ENCODE measurements at regions of chr15 and their contacts with region 1.

Region 1: GRCh38 chr15:33700695-33701304 is 267.5 kb upstream of the CHRM5 start:
- DNase-seq: peak; percentile 87
- ATAC-seq: peak; percentile 90
- H3K4me3 Mint-ChIP-seq: no peak overlapping the region
- H3K27ac Mint-ChIP-seq: no peak overlapping the region
- H3K4me1 Mint-ChIP-seq: peaks cover 23% of the 10 kb centered on the region
- H3K27me3 Mint-ChIP-seq: no peaks in the 10 kb centered on the region
- CTCF ChIP-seq: peak; percentile 89

Region 2: GRCh38 chr15:33234014-33234461 is 466.8 kb before region 1 on chr15:
- CTCF ChIA-PET with region 1: interaction called, 15 read pairs
- POLR2A ChIA-PET with region 1: no interaction called
- DNase-seq: no peak
- ATAC-seq: peak; percentile 55
- H3K4me3 Mint-ChIP-seq: no peak overlapping the region
- H3K27ac Mint-ChIP-seq: no peak overlapping the region
- H3K4me1 Mint-ChIP-seq: peaks cover 12% of the 10 kb centered on the region
- H3K27me3 Mint-ChIP-seq: no peaks in the 10 kb centered on the region
- CTCF ChIP-seq: peak; percentile 39; the same call in 1 of the 2 replicates

Region 3: DNA sequence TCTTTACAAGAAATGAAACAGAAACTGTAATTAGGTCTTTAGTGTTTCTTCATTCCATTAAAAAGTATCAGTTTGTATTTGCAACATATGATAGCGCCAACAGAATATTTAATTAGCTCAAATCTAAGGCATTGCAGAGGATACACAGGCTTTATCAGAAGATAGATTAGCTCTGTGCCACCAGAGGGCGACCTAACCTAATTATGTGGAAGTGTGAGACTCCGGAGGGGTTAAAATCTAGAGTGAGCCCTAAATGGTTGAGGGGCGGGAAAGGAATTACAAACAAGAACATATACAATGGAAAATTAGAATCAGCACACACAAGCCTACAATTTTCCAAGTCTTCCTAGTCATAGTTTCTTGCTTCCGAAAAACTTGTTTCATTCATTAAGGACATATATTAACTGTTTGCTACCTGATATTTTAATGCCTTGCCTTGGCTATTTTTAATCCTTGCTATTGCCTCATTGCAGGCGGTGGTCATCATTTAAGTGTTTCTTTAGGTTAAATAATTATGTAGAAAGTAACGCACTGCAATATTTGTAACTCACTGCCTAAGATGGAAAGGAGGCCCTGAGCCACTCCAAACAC is 408.0 kb before region 1 on chr15:
- CTCF ChIA-PET with region 1: interaction called, 131 read pairs
- POLR2A ChIA-PET with region 1: no interaction called
- DNase-seq: peak; percentile 74
- ATAC-seq: peak; percentile 88
- H3K4me3 Mint-ChIP-seq: no peak overlapping the region
- H3K27ac Mint-ChIP-seq: no peak overlapping the region
- H3K4me1 Mint-ChIP-seq: 0 out of 2 replicates have a peak, but pooled peaks cover 4% of the 10 kb centered on the region
- H3K27me3 Mint-ChIP-seq: no peaks in the 10 kb centered on the region
- CTCF ChIP-seq: peak; percentile 46; the same call in 1 of the 2 replicates

Region 4: GRCh38 chr15:33398555-33398954 is 302.2 kb before region 1 on chr15:
- CTCF ChIA-PET with region 1: interaction called, 20 read pairs
- POLR2A ChIA-PET with region 1: no interaction called
- DNase-seq: no peak
- ATAC-seq: no peak; the same call in 1 of the 2 replicates
- H3K4me3 Mint-ChIP-seq: no peak overlapping the region
- H3K27ac Mint-ChIP-seq: no peak overlapping the region
- H3K4me1 Mint-ChIP-seq: peaks cover 34% of the 10 kb centered on the region
- H3K27me3 Mint-ChIP-seq: no peaks in the 10 kb centered on the region
- CTCF ChIP-seq: no peak

Region 5: DNA sequence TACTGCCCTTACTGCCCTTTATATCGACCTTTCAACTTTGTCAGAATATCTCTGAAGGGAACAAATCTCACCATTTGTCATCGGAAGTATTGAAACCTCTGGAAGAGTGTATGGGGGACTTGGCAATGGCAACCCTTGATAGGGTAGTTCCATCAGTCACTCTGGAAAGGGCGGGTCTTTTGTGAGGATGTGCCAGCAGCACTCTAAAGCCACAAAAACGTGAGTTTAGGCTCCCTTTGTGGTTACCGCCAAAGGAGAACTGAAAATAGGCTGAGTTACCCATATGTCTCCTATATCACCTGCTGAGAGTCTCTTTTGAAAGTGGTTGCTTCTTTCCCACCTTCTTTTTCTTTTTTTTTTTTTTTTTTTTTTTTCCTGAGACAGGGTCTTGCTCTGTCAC is 29.3 kb before region 1 on chr15:
- CTCF ChIA-PET with region 1: interaction called, 12 read pairs
- POLR2A ChIA-PET with region 1: no interaction called
- DNase-seq: no peak
- ATAC-seq: no peak
- H3K4me3 Mint-ChIP-seq: no peak overlapping the region
- H3K27ac Mint-ChIP-seq: no peak overlapping the region
- H3K4me1 Mint-ChIP-seq: peaks cover 20% of the 10 kb centered on the region
- H3K27me3 Mint-ChIP-seq: no peaks in the 10 kb centered on the region
- CTCF ChIP-seq: no peak

Region 6: GRCh38 chr15:33729653-33730052 is 28.9 kb after region 1 on chr15:
- CTCF ChIA-PET with region 1: interaction called, 62 read pairs
- POLR2A ChIA-PET with region 1: no interaction called
- DNase-seq: no peak
- ATAC-seq: no peak
- H3K4me3 Mint-ChIP-seq: no peak overlapping the region
- H3K27ac Mint-ChIP-seq: no peak overlapping the region
- H3K4me1 Mint-ChIP-seq: no peaks in the 10 kb centered on the region
- H3K27me3 Mint-ChIP-seq: no peaks in the 10 kb centered on the region
- CTCF ChIP-seq: no peak